Activated T-helper 1 cell treated with anti-CD3 and anti-CD28 coated beads, Interleukin-12 subunit alpha, Interleukin-12 subunit beta, Interleukin-2, Interleukin-4 antibody, amounts not matched to agents 30 ng/mL and 10 ng/mL and 1 ng/mL, durations not matched to agents 14 hours and 24 hours and 36 hours (primary cell): ENCODE measurements at regions of chr19 and their contacts with region 1.

Region 1: GRCh38 chr19:925526-926322 is at the start of gene ARID3A:
- DNase-seq: peak; percentile 74
- H3K4me3 Mint-ChIP-seq: peak within 1 kb of the TSS; percentile 82
- H3K27ac Mint-ChIP-seq: peak within 1 kb of the TSS; percentile 73
- H3K4me1 Mint-ChIP-seq: peaks cover 13% of the 10 kb centered on the region
- H3K27me3 Mint-ChIP-seq: no peaks in the 10 kb centered on the region
- total RNA-seq, gene ARID3A: 32.5 and 35.0 TPM in 2 replicates

Region 2: GRCh38 chr19:771332-771785 is 154.4 kb before region 1 on chr19:
- intact Hi-C with region 1: loop called (anchors 1 kb)
- DNase-seq: no peak
- H3K4me3 Mint-ChIP-seq: no peak overlapping the region
- H3K27ac Mint-ChIP-seq: no peak overlapping the region
- H3K4me1 Mint-ChIP-seq: peaks cover 5% of the 10 kb centered on the region
- H3K27me3 Mint-ChIP-seq: peaks cover 6% of the 10 kb centered on the region

Region 3: GRCh38 chr19:850221-850978 is 75.3 kb before region 1 on chr19:
- intact Hi-C with region 1: no loop called
- DNase-seq: no peak
- H3K4me3 Mint-ChIP-seq: no peak overlapping the region
- H3K27ac Mint-ChIP-seq: no peak overlapping the region
- H3K4me1 Mint-ChIP-seq: no peaks in the 10 kb centered on the region
- H3K27me3 Mint-ChIP-seq: peaks cover 3% of the 10 kb centered on the region

Region 4: DNA sequence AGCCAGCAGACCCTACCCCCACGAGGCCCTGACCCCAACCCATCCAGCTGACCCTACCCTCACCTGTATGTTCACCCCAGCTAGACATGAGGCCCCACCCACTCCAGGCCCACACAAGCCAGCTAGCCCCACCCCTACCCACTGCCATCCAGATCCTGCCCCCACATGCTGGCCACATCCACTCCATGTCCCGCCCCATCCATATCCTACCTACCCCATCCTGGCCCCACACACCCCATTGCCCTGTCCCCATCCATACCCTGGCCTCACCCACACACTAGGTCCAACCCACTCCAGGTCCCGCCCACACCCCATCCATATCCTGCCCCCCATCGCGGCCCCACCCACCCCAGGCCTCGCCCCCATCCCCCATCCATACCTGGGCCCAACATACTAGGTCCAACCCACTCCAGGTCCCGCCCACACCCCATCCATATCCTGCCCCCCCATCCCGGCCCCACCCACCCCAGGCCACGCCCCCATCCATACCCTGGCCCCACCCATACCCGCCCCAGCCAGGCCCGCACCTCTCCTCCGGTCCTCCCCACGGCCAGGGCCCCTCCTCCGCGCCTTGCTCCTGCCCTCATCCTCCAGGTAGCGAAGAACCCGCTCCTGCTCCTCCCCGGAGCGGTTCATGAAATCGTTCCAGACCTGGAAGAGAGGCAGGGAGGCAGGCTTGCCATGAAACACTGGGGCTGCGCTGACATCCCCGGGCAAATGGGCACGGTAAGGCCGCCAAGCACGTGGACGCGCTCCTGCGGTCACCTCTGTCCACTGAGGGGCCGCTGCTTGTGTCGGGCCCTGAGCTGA is 25.2 kb before region 1 on chr19:
- intact Hi-C with region 1: no loop called
- DNase-seq: no peak
- H3K4me3 Mint-ChIP-seq: no peak overlapping the region
- H3K27ac Mint-ChIP-seq: no peak overlapping the region
- H3K4me1 Mint-ChIP-seq: no peaks in the 10 kb centered on the region
- H3K27me3 Mint-ChIP-seq: no peaks in the 10 kb centered on the region

Region 5: GRCh38 chr19:937259-937694 is 11.6 kb after region 1 on chr19:
- intact Hi-C with region 1: loop called (anchors 1 kb)
- DNase-seq: peak; percentile 39
- H3K4me3 Mint-ChIP-seq: no peak overlapping the region
- H3K27ac Mint-ChIP-seq: peak overlapping the region; percentile 49
- H3K4me1 Mint-ChIP-seq: peaks cover 19% of the 10 kb centered on the region
- H3K27me3 Mint-ChIP-seq: peaks cover 4% of the 10 kb centered on the region

Region 6: DNA sequence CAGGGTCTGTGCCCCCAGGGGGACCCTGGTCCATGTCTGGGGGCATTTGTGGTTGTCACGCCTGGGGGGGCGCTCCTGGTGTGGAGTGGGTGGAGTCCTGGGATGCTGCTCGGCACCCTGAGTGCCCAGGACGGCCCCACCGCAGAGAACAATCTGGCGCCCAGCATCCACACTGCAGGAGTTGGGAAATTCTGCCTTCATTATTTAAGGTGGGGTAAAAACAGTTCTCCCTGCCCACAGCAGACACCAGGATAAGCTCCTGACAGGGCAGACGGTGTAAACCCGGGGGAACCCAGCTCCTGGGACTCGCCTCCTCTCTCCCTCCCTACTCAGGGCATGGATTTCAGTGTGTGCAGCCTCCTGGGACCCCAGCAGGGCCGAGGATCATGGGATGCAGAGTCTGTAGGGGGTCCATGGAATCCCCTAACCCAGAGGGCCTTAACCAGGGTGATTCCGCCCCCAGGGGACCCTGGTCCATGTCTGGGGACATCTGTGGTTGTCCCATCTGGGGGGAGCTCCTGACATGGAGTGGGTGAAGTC is 50.8 kb after region 1 on chr19:
- intact Hi-C with region 1: no loop called
- DNase-seq: no peak
- H3K4me3 Mint-ChIP-seq: no peak overlapping the region
- H3K27ac Mint-ChIP-seq: no peak overlapping the region
- H3K4me1 Mint-ChIP-seq: no peaks in the 10 kb centered on the region
- H3K27me3 Mint-ChIP-seq: peaks cover 5% of the 10 kb centered on the region

Region 7: DNA sequence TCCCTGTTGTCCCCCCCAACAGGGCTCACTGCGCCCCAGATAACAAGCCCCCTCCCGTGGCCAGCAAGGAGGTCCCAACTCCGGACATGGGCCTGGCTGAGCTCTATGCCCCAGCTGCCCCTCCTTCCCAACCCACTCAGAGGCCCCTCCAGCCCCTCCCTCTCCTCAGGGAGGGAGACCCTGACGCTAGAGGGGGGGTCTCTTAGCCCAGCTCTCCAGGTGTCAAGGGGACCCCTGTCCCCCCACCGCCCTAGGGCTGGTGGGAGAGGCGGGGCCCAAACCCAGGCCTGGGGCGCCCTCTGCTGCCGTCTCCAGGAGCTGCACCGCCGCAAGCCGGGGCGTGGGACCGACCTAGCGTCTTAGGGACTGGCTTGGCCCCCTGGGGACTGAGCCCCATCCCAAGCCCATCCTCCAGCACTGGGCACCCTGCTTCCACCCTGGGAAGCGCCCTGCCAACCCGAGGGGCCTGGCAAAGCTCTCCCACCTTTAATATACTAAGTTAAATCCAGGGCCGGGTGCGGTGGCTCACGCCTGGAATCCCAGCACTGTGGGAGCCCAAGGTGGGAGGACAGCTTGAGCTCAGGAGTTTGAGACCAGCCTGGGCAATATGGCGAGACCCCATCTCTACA is 75.9 kb after region 1 on chr19:
- intact Hi-C with region 1: loop called (anchors 1 kb)
- DNase-seq: peak; percentile 58
- H3K4me3 Mint-ChIP-seq: no peak overlapping the region
- H3K27ac Mint-ChIP-seq: no peak overlapping the region
- H3K4me1 Mint-ChIP-seq: peaks cover 5% of the 10 kb centered on the region
- H3K27me3 Mint-ChIP-seq: peaks cover 33% of the 10 kb centered on the region

Region 8: DNA sequence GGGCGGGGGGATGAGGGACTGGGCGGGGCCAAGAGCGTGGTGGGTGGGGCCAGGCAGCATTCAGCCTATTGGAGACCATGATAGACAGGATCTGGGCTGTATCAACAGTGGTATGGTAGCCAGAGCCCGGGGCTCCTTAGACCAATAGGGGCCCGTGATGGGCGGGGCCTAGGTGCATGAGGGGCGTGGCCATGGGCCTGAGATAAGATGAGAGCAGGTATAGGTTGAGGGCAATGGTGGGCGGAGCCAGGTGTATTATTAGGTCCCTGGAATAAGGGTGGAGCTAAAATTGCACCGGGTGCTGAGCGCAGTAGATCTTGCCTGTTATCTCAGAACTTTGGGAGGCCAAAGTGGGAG is 119.5 kb after region 1 on chr19:
- intact Hi-C with region 1: no loop called
- DNase-seq: peak; percentile 66
- H3K4me3 Mint-ChIP-seq: no peak overlapping the region
- H3K27ac Mint-ChIP-seq: no peak overlapping the region
- H3K4me1 Mint-ChIP-seq: peaks cover 13% of the 10 kb centered on the region
- H3K27me3 Mint-ChIP-seq: no peaks in the 10 kb centered on the region

Region 9: GRCh38 chr19:1241417-1242095 is 315.8 kb after region 1 on chr19 and contains the start of gene ATP5F1D:
- intact Hi-C with region 1: loop called (anchors 1 kb)
- DNase-seq: peak; percentile 91
- H3K4me3 Mint-ChIP-seq: peak within 1 kb of the TSS; percentile 91
- H3K27ac Mint-ChIP-seq: peak within 1 kb of the TSS; percentile 84
- H3K4me1 Mint-ChIP-seq: peaks cover 27% of the 10 kb centered on the region
- H3K27me3 Mint-ChIP-seq: peaks cover 16% of the 10 kb centered on the region
- total RNA-seq, gene ATP5F1D: 234 and 239 TPM in 2 replicates